ENCODE measurements at regions of chr19 and their contacts with region 1.

Region 1: DNA sequence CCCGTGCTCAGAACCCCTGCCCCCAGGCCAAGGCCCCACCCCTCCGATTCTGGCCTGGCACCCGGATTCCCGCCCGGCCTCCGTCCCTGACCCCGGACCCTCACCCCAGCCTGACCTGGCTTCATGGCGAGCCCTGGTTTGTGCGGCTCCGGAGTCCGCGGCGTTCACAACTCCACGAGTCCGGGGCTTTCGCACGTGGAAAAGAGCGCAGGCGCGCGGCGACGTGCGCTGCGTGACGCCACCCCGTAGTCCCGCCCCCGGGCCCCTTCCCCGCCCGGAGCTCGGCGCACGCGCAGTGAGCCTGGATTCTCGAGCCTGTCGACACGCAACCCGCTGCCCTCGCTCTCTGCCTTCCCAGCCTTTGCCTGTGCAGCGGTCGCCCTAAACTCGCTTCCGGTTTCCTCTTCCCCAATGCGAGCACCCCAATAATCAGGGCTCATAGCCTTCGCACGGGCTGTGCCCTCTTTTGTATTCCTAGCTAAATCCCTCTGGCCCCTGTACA is at the start of gene FBL:
- DNase-seq: peak; percentile 89 to 95 (median 91)
- H3K4me3 ChIP-seq: peak within 1 kb of the TSS; percentile 38 to 93 (median 74)
- H3K27ac ChIP-seq: peak within 1 kb of the TSS; percentile 67 to 82
- H3K4me1 ChIP-seq: peaks cover 15 to 45% (median 36%) of the 10 kb centered on the region in 4 experiments
- H3K27me3 ChIP-seq: no peaks in the 10 kb centered on the region

Region 2: GRCh38 chr19:39765091-39766076 is 80.8 kb before region 1 on chr19:
- CTCF ChIA-PET with region 1: interaction called, 18 read pairs
- POLR2A ChIA-PET with region 1: no interaction called
- DNase-seq: peak; percentile 45 to 51 (median 48)
- H3K4me3 ChIP-seq: no peak overlapping the region
- H3K27ac ChIP-seq: no peak overlapping the region
- H3K4me1 ChIP-seq: no peaks in the 10 kb centered on the region
- H3K27me3 ChIP-seq: peaks cover 0 to 11% (median 3%) of the 10 kb centered on the region in 5 experiments

Region 3: GRCh38 chr19:39792999-39793546 is 53.2 kb before region 1 on chr19:
- CTCF ChIA-PET with region 1: interaction called, 89 read pairs
- POLR2A ChIA-PET with region 1: interaction called, 3 read pairs
- DNase-seq: peak; percentile 76 to 86 (median 85)
- H3K4me3 ChIP-seq: peak overlapping the region in 6 of 7 experiments; percentile 19 to 84 (median 64)
- H3K27ac ChIP-seq: no peak overlapping the region
- H3K4me1 ChIP-seq: peaks cover 0 to 2% (median 0%) of the 10 kb centered on the region in 4 experiments
- H3K27me3 ChIP-seq: peaks cover 0 to 10% (median 2%) of the 10 kb centered on the region in 5 experiments

Region 4: GRCh38 chr19:39802958-39803357 is 43.3 kb before region 1 on chr19:
- CTCF ChIA-PET with region 1: interaction called, 19 read pairs
- POLR2A ChIA-PET with region 1: no interaction called
- DNase-seq: no peak
- H3K4me3 ChIP-seq: no peak overlapping the region
- H3K27ac ChIP-seq: no peak overlapping the region
- H3K4me1 ChIP-seq: no peaks in the 10 kb centered on the region
- H3K27me3 ChIP-seq: peaks cover 2 to 11% (median 3%) of the 10 kb centered on the region in 5 experiments

Region 5: GRCh38 chr19:39828015-39828653 is 18.1 kb before region 1 on chr19:
- CTCF ChIA-PET with region 1: interaction called, 14 read pairs
- POLR2A ChIA-PET with region 1: interaction called, 8 read pairs
- DNase-seq: no peak
- H3K4me3 ChIP-seq: no peak overlapping the region
- H3K27ac ChIP-seq: no peak overlapping the region
- H3K4me1 ChIP-seq: peaks cover 8 to 30% (median 26%) of the 10 kb centered on the region in 4 experiments
- H3K27me3 ChIP-seq: no peaks in the 10 kb centered on the region

Region 6: GRCh38 chr19:39833464-39834286 is 12.6 kb before region 1 on chr19 and contains the start of gene DYRK1B:
- CTCF ChIA-PET with region 1: interaction called, 14 read pairs
- POLR2A ChIA-PET with region 1: interaction called, 8 read pairs
- DNase-seq: peak; percentile 97 to 99 (median 98)
- H3K4me3 ChIP-seq: peak within 1 kb of the TSS; percentile 66 to 96 (median 89)
- H3K27ac ChIP-seq: peak within 1 kb of the TSS; percentile 98 to 99
- H3K4me1 ChIP-seq: peaks cover 8 to 26% (median 18%) of the 10 kb centered on the region in 4 experiments
- H3K27me3 ChIP-seq: no peaks in the 10 kb centered on the region